CD4-positive, alpha-beta T cell (primary cell): ENCODE measurements at regions of chr3 and their contacts with region 1.

Region 1: DNA sequence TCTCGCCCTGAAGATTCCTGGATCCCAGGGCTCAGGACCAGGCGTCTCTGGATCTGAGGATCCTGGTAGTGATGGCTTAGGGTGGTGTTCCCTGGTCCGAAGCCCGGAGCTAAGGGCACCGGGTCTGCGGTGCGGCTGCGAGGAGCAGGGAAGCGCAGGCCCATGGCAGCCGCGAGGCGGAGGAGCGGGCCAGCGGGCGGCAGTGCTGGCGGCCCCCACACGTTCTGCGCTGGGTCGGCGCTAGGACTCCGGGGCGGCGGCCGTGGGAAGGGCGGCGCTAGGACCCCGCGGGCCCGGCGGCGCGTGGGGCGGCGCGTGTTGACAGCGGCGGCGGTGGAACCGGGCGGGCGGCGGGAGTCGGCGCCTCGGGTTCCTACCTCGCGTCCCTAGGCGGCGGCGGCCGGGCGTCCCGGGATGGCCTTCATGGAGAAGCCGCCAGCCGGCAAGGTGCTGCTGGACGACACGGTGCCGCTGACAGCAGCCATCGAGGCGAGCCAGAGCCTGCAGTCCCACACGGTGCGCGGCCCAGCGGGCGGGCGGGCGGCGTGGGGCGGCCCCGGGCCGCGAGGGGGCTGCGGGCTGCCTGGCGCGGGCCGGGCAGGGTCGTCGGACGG is at the start of gene PXK:
- DNase-seq: peak; percentile 55 to 88 (median 72)
- ATAC-seq: peak; percentile 90
- H3K4me3 ChIP-seq: peak within 1 kb of the TSS; percentile 61
- H3K4me3 Mint-ChIP-seq: peak within 1 kb of the TSS; percentile 99
- H3K27ac ChIP-seq: no peak within 1 kb of the TSS
- H3K27ac Mint-ChIP-seq: peak within 1 kb of the TSS; percentile 73
- H3K4me1 ChIP-seq: peaks cover 23% of the 10 kb centered on the region
- H3K4me1 Mint-ChIP-seq: peaks cover 39% of the 10 kb centered on the region
- H3K27me3 ChIP-seq: no peaks in the 10 kb centered on the region
- H3K27me3 Mint-ChIP-seq: no peaks in the 10 kb centered on the region
- CTCF ChIP-seq: no peak
- total RNA-seq, gene PXK: 12.5 to 14.8 TPM

Region 2: DNA sequence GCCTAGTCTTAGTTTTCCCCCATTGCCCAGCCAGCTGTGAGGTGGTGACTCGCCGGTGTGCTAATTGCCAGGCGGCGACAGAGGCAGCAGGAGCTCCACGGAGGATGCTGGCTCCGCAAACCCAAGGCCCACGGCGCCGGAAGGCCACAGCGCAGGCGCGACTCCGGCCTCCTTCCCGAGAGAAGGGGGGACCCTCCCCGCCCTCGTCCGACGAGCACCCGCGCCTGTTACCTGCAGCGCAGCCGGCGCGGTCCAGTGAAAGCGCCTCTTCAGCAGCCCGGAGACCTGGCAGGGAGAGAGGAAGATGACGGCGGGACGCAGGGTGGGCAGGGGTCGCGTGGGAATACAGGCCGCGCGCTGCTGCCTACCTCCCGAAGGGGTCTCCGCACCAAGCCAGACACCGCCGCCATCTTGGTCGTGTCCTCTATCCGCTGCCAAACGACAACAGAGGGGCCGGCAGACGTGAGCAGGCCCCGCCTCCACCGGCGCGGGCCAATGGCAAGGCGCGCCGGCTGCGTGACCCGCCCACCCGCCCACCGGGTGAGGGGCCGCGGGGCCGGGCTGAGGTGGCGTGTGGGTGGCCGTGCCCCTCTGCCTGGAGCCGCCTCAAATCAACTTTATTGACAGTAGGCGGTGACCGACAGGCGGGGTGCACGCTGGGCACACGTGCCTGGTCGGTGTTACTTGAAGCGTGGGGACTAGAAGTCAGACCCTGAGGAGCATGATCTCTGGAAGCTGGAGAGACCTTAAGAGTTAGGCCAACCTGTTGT is 100.9 kb after region 1 on chr3 and contains the start of gene PDHB:
- CTCF ChIA-PET with region 1: no interaction called
- POLR2A ChIA-PET with region 1: interaction called, 7 read pairs
- intact Hi-C with region 1: loop called (anchors 1 to 5 kb)
- DNase-seq: peak; percentile 77 to 94 (median 86)
- ATAC-seq: peak; percentile 96
- H3K4me3 ChIP-seq: peak within 1 kb of the TSS; percentile 93
- H3K4me3 Mint-ChIP-seq: peak within 1 kb of the TSS; percentile 90
- H3K27ac ChIP-seq: peak within 1 kb of the TSS; percentile 79 to 85
- H3K27ac Mint-ChIP-seq: peak within 1 kb of the TSS; percentile 86
- H3K4me1 ChIP-seq: peaks cover 20% of the 10 kb centered on the region
- H3K4me1 Mint-ChIP-seq: peaks cover 33% of the 10 kb centered on the region
- H3K27me3 ChIP-seq: no peaks in the 10 kb centered on the region
- H3K27me3 Mint-ChIP-seq: no peaks in the 10 kb centered on the region
- CTCF ChIP-seq: no peak
- total RNA-seq, gene PDHB: 31.1 to 31.5 TPM